ENCODE measurements at regions of chr14 and their contacts with region 1.

Region 1: GRCh38 chr14:36320200-36320896 is at the start of gene MBIP:
- DNase-seq: peak; percentile 79 to 97 (median 90)
- H3K4me3 ChIP-seq: peak within 1 kb of the TSS; percentile 49 to 98 (median 87)
- H3K27ac ChIP-seq: peak within 1 kb of the TSS in 51 of 59 donors; percentile 12 to 93 (median 73)
- H3K27me3 ChIP-seq: no peaks in the 10 kb centered on the region
- CTCF ChIP-seq: peak in 3 of 56 donors; percentile 12 to 16 (median 12)
- total RNA-seq, gene MBIP: 19.6 to 37.9 (median 27.3) TPM

Region 2: DNA sequence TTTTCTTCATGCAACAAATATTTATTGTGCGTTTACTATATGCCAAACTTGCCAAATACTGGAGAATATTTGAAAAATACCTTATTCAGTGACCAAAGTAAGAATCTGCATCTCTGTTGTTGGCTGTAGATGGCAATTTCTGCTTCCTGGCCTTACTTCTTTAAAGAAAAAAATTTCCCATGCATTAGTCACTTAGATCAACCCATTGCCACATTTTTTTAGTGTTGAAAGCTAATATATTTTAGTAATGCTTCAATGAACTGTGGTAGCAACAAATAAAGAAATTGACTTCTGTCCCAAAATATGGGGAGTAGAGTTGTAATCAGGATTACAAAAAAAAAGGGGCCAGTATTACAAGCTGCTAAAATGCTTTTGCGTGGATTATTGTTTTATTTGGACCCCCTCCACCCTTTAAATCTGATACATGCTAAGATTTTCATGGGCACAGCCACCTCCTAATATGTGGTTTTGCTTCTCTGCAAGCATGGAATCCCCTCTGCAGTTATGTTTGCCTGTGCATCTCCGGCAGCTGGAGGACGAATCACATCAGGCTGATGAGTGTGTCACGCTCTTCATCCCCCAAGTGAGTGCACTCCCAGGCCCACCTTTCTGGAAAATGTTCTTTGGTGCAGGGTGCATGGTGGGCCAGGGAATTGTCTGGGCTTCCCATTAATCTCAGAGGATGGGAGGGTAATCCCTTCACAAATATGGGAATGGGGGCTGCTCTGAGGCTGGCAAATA is 105.7 kb before region 1 on chr14:
- intact Hi-C with region 1: loop called in 1 of 2 experiments (anchors 5 kb)
- DNase-seq: no peak
- H3K4me3 ChIP-seq: no peak overlapping the region
- H3K27ac ChIP-seq: peak overlapping the region in 1 of 59 donors; percentile 2
- H3K27me3 ChIP-seq: peaks cover 0 to 13% (median 0%) of the 10 kb centered on the region in 45 donors
- CTCF ChIP-seq: no peak

Region 3: GRCh38 chr14:36604757-36605505 is 284.6 kb after region 1 on chr14:
- intact Hi-C with region 1: loop called in 1 of 2 experiments (anchors 5 kb)
- DNase-seq: peak in 4 of 10 donors; percentile 14 to 62 (median 36)
- H3K4me3 ChIP-seq: no peak overlapping the region
- H3K27ac ChIP-seq: no peak overlapping the region
- H3K27me3 ChIP-seq: peaks cover 0 to 52% (median 9%) of the 10 kb centered on the region in 45 donors
- CTCF ChIP-seq: peak; percentile 60 to 87 (median 78)